ENCODE measurements at regions of chr9 and their contacts with region 1.

Region 1: DNA sequence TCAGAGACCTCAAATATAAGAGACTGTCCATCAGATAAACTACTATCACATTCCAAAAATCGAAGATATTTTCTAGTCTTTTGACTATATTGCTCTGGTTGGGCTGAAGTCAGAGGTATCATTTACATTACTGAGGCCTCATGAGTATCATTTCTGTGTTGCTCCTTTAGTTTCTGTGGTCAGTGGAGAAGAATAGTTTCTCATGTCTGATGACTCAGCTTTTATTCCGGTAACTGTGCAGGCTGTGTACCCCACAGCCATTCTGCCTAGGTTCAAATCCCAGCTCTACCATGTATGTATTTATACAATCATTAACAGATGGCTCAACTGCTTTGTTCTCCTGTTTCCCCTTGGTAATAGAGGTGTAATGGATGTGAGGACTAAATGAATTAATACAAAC is 179.3 kb downstream of the ALDH1A1 start:
- DNase-seq: no peak
- H3K4me3 ChIP-seq: no peak overlapping the region
- H3K27ac ChIP-seq: no peak overlapping the region
- H3K4me1 ChIP-seq: no peaks in the 10 kb centered on the region
- H3K27me3 ChIP-seq: no peaks in the 10 kb centered on the region
- CTCF ChIP-seq: no peak
- POLR2A ChIP-seq: no peak

Region 2: GRCh38 chr9:72718503-72718902 is 55.1 kb before region 1 on chr9:
- CTCF ChIA-PET with region 1: no interaction called
- POLR2A ChIA-PET with region 1: no interaction called
- dilution Hi-C with region 1: no loop called
- intact Hi-C with region 1: loop called (anchors 10 kb)
- DNase-seq: no peak
- H3K4me3 ChIP-seq: no peak overlapping the region
- H3K27ac ChIP-seq: no peak overlapping the region
- H3K4me1 ChIP-seq: no peaks in the 10 kb centered on the region
- H3K27me3 ChIP-seq: no peaks in the 10 kb centered on the region
- CTCF ChIP-seq: no peak
- POLR2A ChIP-seq: no peak

Region 3: DNA sequence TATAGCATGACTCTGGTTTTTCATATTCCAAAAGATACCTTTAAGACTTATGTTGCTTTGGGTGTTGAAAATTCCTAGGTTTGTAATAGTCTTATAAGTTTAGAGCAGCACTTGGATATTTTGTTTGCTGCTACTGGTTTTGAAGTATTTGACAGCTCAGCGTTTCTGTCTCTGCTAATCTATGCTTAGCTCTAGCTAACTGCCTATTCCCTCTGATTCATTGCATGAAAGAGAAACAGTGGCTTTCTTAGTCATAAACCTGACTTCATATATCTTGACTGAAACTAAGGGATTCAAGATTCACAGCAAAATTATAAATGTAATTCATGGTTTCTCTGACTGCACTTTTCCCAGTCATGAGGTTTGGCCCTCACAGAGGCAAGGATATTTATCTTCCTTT is 342.5 kb after region 1 on chr9:
- CTCF ChIA-PET with region 1: no interaction called
- POLR2A ChIA-PET with region 1: no interaction called
- dilution Hi-C with region 1: no loop called
- intact Hi-C with region 1: no loop called
- DNase-seq: no peak
- H3K4me3 ChIP-seq: no peak overlapping the region
- H3K27ac ChIP-seq: no peak overlapping the region
- H3K4me1 ChIP-seq: peaks cover 18% of the 10 kb centered on the region
- H3K27me3 ChIP-seq: no peaks in the 10 kb centered on the region
- CTCF ChIP-seq: no peak
- POLR2A ChIP-seq: no peak

Measured in endothelial cell of umbilical vein (primary cell).